Head of caudate nucleus (tissue), 42 donors: ENCODE measurements at regions of chr2 and their contacts with region 1.

Region 1: DNA sequence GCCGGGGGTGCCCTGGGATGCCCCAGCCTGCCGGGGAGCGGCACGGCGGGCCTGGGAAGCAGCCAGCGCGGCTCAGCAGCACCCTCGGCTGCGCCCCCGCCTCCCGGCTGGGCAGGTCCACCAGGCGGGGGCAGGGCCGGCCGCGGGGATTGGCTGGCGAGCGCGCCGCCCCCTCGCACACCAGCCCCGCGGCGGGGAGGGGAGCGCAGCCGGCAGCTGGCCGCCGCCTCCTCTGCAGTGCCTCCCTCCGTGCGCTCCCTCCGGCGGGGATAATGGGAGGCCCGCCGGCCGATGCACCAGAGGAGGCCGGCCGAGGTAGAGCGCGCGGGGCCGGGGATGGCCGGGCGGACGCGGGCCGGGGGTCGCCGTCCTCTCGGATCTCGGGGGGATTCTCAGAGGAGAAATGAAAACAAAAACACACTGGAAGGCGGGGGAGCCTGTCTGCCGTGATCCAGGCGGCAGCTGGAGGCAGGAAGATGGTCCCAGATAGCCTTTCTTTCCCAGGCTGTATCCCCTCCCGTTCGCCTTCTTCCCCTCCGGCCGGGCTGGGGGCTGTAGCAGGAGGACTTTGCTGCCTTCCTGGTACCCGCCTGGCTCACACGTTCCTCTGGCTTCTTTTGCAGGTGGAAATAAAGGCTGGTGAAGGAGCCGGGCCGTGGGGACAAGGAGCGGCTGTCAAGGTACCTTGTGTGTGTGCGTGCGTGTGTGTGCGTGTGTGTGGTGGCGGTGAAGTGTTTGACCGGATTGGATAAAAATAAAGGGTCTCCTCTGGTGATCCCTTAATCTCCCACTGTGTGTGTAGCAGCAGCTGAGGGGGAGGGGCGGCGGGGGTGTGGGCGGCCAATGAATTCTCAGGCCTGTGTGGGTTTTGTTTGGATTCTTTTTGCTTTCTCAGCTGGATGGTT is 18.0 kb downstream of the TET3 start:
- DNase-seq: peak; percentile 58 to 95 (median 89)

Region 2: DNA sequence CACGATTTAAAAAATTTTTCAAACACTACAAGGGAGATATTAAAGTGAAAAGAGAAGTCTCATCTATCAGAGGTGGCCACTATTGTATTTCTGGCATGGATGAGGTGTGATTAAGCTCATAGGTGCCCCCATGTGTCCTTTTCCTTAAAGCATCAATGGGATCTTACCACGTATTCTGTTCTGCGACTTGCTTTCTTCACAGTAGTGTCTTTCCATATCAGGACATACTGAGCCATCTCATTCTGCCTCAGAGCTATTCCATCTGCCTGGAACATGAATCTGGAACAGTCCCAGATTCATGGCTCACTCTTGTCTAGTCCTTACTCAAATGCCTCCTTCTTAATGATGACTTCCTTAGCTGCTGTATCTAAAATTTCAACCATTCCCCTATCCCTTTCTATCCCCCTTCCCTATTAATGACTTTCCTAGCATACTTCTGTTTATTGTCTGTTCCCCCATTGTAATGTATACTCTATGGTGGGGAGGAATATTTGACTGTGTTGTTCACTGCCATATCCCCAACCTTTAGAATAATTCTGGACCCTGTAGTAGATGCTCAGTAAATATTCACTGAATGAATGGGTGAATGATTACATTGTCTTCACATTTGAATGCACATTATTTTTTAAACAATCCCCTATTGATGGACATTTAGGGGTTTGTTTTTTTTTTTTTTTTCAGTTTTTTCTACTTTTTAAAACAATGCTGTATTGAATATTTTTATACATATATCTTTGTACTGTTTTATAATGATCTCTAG is 162.9 kb before region 1 on chr2:
- intact Hi-C with region 1: loop called (anchors 5 kb)
- DNase-seq: no peak

Region 3: DNA sequence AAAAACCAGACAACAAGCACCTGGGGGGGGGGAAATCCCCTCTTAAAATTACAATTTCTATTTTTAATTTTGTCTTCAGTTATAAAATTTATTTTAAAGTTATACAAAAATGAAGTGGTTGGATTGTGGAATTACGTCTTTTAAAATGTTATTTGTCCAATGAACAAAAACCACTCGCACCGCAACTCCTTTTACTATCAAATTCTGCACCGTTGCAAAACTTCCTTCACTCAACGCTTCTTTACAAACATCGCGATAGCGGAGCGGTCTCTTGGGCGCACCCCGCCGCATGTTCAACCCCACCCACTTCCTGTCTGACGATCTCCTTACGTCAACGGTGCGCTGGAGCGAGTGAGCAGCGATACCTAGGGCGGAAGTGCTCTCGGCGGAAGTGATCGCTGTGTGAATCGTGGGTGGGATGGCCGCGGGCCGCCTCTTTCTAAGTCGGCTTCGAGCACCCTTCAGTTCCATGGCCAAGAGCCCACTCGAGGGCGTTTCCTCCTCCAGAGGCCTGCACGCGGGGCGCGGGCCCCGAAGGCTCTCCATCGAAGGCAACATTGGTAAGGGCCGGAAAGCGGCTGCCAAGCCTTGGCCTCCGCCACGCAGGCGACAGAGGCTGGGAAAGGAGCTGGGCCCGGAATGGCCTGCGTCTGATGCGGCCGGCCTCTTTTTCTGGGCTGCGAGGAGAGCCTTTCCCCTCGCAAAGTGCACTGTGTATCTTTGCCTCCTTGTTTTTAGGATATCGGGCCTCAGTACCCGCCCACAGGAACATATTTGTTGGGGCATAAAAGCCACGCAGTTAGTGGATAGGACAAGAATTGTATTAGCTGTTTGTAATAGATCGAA is 76.0 kb before region 1 on chr2 and contains the start of gene DGUOK:
- intact Hi-C with region 1: loop called (anchors 5 kb)
- DNase-seq: peak; percentile 92 to 98 (median 96)

Region 4: DNA sequence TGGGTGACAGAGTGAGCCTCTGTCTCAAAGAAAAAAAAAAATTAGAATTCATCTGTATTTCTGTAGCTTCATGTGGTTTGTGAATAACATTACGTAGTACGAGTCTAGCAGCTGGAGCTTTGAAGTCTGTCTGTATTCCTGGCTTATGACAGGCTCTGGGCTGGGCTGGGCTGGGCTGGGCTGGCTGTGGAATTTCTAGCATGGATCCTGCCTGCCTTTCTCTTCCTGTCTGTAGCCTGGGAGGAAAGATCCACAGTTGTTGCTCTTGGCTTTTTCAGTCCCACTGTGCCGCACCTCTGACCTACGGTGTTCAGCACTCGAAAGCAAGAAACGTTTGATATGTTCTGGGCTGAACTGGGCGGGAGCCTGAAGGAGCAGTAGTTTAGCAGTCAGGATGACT is 89.5 kb after region 1 on chr2:
- intact Hi-C with region 1: loop called (anchors 10 kb)
- DNase-seq: peak in 11 of 42 donors; percentile 25 to 70 (median 40)